HepG2 (cell line): ENCODE measurements at regions of chr1 and their contacts with region 1.

Region 1: DNA sequence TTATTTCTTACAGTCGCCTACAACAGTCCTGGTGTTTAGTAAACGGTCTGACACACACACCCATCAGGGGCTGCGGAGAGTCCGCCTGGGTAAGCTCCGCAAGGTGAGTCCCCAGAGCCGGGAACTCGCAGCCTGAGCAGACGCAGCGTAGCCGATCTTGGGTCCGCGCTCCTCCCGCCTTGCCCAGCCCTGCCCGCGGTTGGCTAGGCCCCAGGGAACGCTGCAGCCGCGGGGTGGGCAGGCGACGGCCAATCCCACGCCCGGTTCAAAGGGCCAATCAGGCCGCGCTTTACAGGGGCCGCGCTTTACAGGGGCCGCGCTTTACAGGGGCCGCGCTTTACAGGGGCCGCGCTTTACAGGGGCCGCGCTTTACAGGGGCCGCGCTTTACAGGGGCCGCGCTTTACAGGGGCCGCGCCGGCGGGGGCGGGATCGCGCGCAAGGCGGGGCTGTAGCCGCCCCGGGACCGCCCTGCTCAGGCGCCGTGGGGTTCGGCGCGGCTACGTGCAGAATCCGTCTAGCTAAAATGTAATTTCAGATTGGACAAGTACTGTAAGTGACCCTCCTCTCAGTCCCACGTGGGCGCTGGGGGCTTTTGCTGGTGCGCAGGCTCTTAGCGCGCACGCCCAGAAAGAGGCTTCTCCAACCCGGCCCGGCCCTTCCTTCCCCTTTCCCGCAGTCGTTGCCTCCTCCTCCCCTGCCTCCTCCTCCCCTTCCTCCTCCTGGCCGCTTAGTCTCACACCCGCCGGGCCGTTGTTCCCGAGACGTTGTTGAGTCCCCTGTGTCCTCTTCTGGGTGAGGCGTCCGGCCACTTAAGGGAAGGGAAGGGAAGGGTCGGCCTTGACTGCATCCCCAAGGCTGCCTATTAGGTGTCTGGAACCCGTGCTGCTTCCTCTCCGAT is at the start of gene FGGY:
- DNase-seq: peak; percentile 96
- ATAC-seq: peak; percentile 95
- H3K4me3 ChIP-seq: peak within 1 kb of the TSS; percentile 59 to 85 (median 82)
- H3K27ac ChIP-seq: peak within 1 kb of the TSS; percentile 93
- H3K4me1 ChIP-seq: peaks cover 53% of the 10 kb centered on the region
- H3K27me3 ChIP-seq: no peaks in the 10 kb centered on the region; a peak in 1 of 5 replicates
- CTCF ChIP-seq: peak; percentile 25
- EP300 ChIP-seq: no peak
- POLR2A ChIP-seq: peak; percentile 77 to 84
- RAD21 ChIP-seq: no peak; the same call in none of the 2 replicates
- total RNA-seq, gene FGGY: 15.7 and 20.0 TPM in 2 replicates

Region 2: DNA sequence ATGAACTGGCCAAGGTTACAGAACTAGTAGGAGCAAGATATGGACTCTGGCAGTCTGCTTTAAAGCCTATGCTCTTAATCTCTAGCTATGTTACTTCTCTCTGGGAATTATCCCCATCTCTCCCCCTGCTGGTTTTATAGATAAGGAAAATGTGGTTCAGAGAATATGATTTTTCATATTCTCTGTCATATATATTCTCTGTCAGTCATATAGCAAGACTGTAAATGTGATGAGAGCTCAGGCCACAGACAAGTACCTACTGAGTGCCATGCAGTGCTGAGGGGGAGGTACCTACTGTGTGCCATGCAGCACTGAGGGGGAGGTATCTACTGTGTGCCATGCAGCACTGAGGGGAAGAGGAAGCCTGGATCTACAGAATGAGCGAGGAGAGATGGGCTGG is 220.0 kb before region 1 on chr1:
- CTCF ChIA-PET with region 1: no interaction called
- POLR2A ChIA-PET with region 1: no interaction called
- in situ Hi-C with region 1: no loop called
- intact Hi-C with region 1: loop called (anchors 10 kb)
- DNase-seq: no peak
- ATAC-seq: no peak
- H3K4me3 ChIP-seq: no peak overlapping the region
- H3K27ac ChIP-seq: no peak overlapping the region
- H3K4me1 ChIP-seq: peaks cover 64% of the 10 kb centered on the region
- H3K27me3 ChIP-seq: 0 out of 5 replicates have a peak, but pooled peaks cover 0 to 5% of the 10 kb centered on the region in 2 experiments
- CTCF ChIP-seq: no peak
- EP300 ChIP-seq: no peak
- POLR2A ChIP-seq: no peak
- RAD21 ChIP-seq: no peak

Region 3: GRCh38 chr1:59214248-59215208 is 82.1 kb before region 1 on chr1:
- CTCF ChIA-PET with region 1: no interaction called
- POLR2A ChIA-PET with region 1: no interaction called
- in situ Hi-C with region 1: no loop called
- intact Hi-C with region 1: loop called (anchors 5 kb)
- DNase-seq: peak; percentile 97
- ATAC-seq: peak; percentile 90
- H3K4me3 ChIP-seq: peak overlapping the region in 1 of 3 experiments; percentile 7; a peak in 1 of 6 replicates
- H3K27ac ChIP-seq: peak overlapping the region; percentile 82
- H3K4me1 ChIP-seq: peaks cover 64% of the 10 kb centered on the region
- H3K27me3 ChIP-seq: no peaks in the 10 kb centered on the region
- CTCF ChIP-seq: no peak
- EP300 ChIP-seq: peak; percentile 61 to 95; a peak in 3 of 4 replicates
- POLR2A ChIP-seq: no peak
- RAD21 ChIP-seq: 0 out of 2 replicates have a peak, but pooled peaks have one; percentile 13

Region 4: GRCh38 chr1:59316497-59317128 is 20.0 kb after region 1 on chr1:
- CTCF ChIA-PET with region 1: no interaction called
- POLR2A ChIA-PET with region 1: interaction called, 27 read pairs
- in situ Hi-C with region 1: no loop called
- intact Hi-C with region 1: no loop called
- DNase-seq: no peak
- ATAC-seq: peak; percentile 48
- H3K4me3 ChIP-seq: peak overlapping the region in 2 of 3 experiments; percentile 6 to 9; a peak in 1 of 6 replicates
- H3K27ac ChIP-seq: peak overlapping the region; percentile 58
- H3K4me1 ChIP-seq: peaks cover 40% of the 10 kb centered on the region
- H3K27me3 ChIP-seq: no peaks in the 10 kb centered on the region
- CTCF ChIP-seq: no peak
- EP300 ChIP-seq: no peak
- POLR2A ChIP-seq: no peak
- RAD21 ChIP-seq: no peak

Region 5: DNA sequence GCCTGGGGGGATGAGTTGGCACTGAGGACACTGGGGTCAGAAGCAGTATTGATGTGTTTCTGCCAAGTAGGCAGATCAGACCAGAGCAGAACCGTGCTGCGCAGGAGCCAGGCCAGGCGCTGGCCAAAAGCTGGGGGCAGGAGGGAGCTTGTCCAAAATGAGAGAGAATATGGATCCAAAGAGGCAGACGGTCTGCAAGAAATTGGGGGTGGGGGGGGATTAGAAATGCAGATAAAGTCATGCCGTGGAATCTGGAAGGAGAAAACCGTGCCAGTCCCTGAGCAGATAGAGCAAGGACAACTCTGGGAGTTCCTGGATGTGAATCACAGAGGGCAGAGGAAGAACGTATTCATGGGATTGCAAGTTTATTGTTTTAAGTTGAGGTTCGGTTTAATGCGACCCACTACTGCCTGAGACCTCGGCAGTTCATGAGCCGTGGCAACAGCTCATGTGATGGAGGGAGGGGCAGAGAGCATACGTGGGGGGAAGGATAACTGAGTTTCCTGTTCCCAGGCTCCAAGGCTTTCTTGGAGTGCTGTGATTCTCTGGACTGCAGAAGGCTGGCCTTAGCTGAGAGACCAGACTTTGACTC is 224.3 kb after region 1 on chr1:
- CTCF ChIA-PET with region 1: no interaction called
- POLR2A ChIA-PET with region 1: no interaction called
- in situ Hi-C with region 1: no loop called
- intact Hi-C with region 1: no loop called
- DNase-seq: no peak
- ATAC-seq: no peak
- H3K4me3 ChIP-seq: no peak overlapping the region
- H3K27ac ChIP-seq: no peak overlapping the region
- H3K4me1 ChIP-seq: peaks cover 43% of the 10 kb centered on the region
- H3K27me3 ChIP-seq: no peaks in the 10 kb centered on the region
- CTCF ChIP-seq: no peak
- EP300 ChIP-seq: no peak
- POLR2A ChIP-seq: no peak
- RAD21 ChIP-seq: no peak

Region 6: DNA sequence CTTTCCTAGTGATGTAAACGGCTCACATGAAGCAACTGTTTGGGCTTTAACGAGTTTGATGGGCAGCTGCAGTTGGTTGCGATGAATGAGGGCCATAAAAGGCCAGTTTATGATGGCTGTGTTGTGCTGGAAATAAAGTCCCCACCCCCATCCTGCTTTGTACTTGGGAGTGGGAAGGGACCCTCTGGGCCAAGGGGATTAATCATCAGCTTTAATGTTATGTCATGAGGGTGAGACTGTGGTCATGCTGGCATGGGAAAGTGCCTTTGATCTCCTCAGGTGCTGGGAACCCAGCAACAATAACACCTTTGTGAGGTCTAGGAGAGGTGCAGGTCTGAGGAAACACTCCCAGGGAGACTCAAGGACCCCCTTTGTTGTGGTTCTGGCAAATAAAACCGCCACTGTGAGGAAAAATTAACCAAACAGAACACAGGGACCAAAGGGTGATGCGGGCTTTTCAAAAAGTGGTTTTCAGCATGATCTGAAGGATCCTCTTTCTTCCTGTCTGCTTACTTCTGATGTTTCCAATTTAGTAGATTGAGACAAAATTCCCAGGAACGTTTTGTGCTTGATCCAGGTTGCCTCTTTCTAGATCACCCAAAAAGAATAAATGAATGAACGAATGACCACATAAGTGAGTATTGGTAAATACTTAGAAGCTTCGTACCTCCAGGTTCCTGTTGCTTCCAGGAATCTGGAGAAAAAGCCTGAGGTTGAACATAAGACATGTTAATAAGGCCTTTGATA is 260.4 kb after region 1 on chr1:
- CTCF ChIA-PET with region 1: no interaction called
- POLR2A ChIA-PET with region 1: interaction called, 9 read pairs
- in situ Hi-C with region 1: loop called (anchors 10 kb)
- intact Hi-C with region 1: loop called (anchors 1 kb)
- DNase-seq: peak; percentile 100
- ATAC-seq: peak; percentile 95
- H3K4me3 ChIP-seq: no peak overlapping the region
- H3K27ac ChIP-seq: peak overlapping the region; percentile 74
- H3K4me1 ChIP-seq: peaks cover 76% of the 10 kb centered on the region
- H3K27me3 ChIP-seq: no peaks in the 10 kb centered on the region
- CTCF ChIP-seq: no peak
- EP300 ChIP-seq: peak; percentile 96 to 99; a peak in 3 of 4 replicates
- POLR2A ChIP-seq: no peak
- RAD21 ChIP-seq: 0 out of 2 replicates have a peak, but pooled peaks have one; percentile 8